Activated CD4-positive, alpha-beta memory T cell treated with anti-CD3 and anti-CD28 coated beads for 36 hours (primary cell): ENCODE measurements at regions of chr19 and their contacts with region 1.

Region 1: DNA sequence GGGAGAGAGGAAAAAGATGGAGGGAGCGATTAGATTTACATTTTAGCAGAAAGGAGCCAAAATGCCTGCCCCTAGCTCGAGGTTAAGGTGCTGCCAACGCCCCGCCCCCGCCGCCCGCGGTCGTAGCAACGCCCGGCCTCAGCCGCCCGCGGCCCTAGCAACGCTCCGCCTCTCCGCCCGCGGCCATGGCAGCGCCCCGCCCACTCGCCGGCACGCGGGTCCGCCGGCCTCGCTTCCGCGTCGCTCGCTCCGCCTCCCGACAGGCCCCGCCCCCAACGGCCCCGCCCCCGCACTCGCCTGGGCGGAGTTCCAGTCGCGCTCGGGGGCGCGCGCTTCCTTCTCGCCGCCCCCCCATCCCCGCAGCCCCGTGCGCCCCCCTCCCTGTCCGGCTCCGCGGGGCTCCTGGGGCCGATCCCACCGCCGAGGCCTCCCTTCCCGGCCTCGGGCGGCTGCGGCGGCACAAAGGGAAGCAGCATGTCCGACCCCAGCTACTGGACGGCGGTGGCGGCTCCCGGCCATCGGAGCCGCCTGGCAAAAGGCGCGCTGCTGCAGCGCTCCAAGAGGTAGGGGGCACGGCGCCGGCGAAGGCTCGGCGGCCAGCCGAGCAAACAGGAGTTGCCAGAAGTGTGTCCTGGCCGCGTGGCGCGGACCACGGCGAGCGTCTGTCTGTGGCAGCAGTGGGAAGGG is 20.3 kb downstream of the MAST3 start:
- DNase-seq: peak; percentile 95
- H3K4me3 Mint-ChIP-seq: peak overlapping the region; percentile 81
- H3K27ac Mint-ChIP-seq: peak overlapping the region; percentile 87
- H3K4me1 Mint-ChIP-seq: peaks cover 36% of the 10 kb centered on the region
- H3K27me3 Mint-ChIP-seq: no peaks in the 10 kb centered on the region

Region 2: GRCh38 chr19:18160971-18161635 is 43.3 kb after region 1 on chr19:
- CTCF ChIA-PET with region 1: interaction called, 13 read pairs
- POLR2A ChIA-PET with region 1: no interaction called
- intact Hi-C with region 1: no loop called
- DNase-seq: peak; percentile 84
- H3K4me3 Mint-ChIP-seq: peak overlapping the region; percentile 64
- H3K27ac Mint-ChIP-seq: no peak overlapping the region
- H3K4me1 Mint-ChIP-seq: peaks cover 4% of the 10 kb centered on the region
- H3K27me3 Mint-ChIP-seq: no peaks in the 10 kb centered on the region

Region 3: GRCh38 chr19:18167975-18168645 is 50.3 kb after region 1 on chr19:
- CTCF ChIA-PET with region 1: interaction called, 35 read pairs
- POLR2A ChIA-PET with region 1: no interaction called
- intact Hi-C with region 1: loop called (anchors 1 kb)
- DNase-seq: peak; percentile 75
- H3K4me3 Mint-ChIP-seq: no peak overlapping the region
- H3K27ac Mint-ChIP-seq: no peak overlapping the region
- H3K4me1 Mint-ChIP-seq: no peaks in the 10 kb centered on the region
- H3K27me3 Mint-ChIP-seq: no peaks in the 10 kb centered on the region